ENCODE measurements at regions of chr10 and their contacts with region 1.

Region 1: DNA sequence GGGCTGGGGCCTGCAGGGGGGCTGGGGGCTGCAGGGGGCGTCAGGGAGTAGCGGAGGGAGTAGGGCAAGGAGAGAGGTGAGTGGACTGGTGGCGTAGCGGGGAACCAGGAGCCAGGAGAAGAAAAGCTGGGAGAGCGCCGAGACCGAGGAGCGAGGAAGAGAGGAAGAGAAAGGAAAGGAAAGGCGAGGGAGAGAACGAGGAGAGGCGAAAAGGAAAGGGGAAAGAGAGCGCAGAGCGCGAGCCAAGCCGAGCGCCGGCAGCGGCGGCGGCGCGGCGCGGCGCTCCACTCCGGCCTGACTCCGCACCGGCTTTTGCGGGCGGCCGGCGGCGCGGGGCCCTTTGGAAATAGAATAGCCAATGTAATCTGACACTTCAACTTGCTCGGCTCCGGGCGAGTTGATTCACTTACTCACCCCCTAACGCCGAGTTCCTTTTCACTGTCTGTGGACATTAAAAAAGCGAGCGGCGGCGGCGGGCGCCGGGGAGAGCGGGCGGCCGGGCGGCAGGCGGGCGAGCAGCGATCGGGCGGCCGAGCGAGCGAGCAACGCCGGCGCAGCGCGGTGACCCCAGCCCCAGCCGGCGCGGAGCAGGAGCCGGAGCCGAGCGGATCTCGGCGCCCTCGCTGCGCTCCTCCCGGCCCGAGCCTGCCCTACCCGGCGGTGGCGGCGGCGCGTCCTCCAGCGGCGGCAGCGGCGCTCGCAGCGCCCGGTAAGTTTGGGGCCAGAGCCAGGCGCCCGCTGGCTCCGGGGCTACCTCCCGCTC is at the start of gene ZMIZ1:
- DNase-seq: peak; percentile 74 to 86 (median 84)
- ATAC-seq: peak; percentile 78
- H3K4me3 ChIP-seq: peak within 1 kb of the TSS; percentile 83
- H3K4me3 Mint-ChIP-seq: peak within 1 kb of the TSS; percentile 92 to 98 (median 96)
- H3K27ac ChIP-seq: peak within 1 kb of the TSS; percentile 62
- H3K27ac Mint-ChIP-seq: peak within 1 kb of the TSS; percentile 57 to 97 (median 91)
- H3K4me1 ChIP-seq: peaks cover 11 to 24% of the 10 kb centered on the region in 2 donors
- H3K4me1 Mint-ChIP-seq: peaks cover 21 to 65% (median 53%) of the 10 kb centered on the region in 7 donors
- H3K27me3 ChIP-seq: no peaks in the 10 kb centered on the region
- H3K27me3 Mint-ChIP-seq: peaks cover 0 to 25% (median 0%) of the 10 kb centered on the region in 5 donors
- total RNA-seq, gene ZMIZ1: 13.5 to 57.2 (median 24.5) TPM

Region 2: DNA sequence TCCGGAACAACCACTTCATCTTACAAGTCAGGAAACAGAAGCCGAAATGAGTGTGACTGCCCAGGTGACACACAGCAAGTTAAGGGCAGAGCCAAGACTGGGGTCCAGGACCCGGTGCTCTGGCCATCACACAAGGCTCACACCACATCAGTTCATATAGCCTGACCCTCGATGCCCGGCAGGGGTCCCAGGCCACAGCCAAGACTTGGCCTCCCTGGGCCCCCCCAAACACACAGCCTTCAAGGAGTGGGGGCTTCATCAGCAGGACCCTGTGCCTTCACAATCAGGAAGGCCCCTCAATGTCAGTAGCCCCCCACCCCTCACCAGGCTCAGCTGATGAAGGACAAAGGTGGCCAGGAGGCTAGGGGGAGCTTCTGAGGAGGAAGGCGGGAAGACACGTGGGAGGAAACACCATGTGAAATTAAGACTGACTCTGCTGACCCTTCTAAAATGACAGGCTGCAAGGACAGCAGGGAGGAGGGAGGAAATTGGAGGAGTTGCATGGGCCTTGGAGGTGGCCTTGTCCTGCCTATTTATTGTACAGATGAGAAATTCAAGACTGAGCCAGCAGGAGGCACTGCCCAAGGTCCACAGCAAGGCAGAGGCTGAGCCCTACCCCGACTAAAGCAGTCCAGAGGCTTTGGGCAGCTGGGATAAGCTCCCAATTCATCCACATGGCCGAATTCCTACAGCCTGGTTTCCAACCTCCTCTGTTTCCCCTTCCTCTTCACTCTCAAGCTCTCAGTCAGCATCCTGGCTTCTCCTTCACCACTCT is 216.1 kb before region 1 on chr10:
- CTCF ChIA-PET with region 1: no interaction called
- POLR2A ChIA-PET with region 1: no interaction called
- intact Hi-C with region 1: loop called in 1 of 2 experiments (anchors 1 kb)
- DNase-seq: peak in 5 of 9 donors; percentile 8 to 29 (median 14)
- ATAC-seq: peak; percentile 57
- H3K4me3 ChIP-seq: no peak overlapping the region
- H3K4me3 Mint-ChIP-seq: no peak overlapping the region
- H3K27ac ChIP-seq: no peak overlapping the region
- H3K27ac Mint-ChIP-seq: no peak overlapping the region
- H3K4me1 ChIP-seq: no peaks in the 10 kb centered on the region
- H3K4me1 Mint-ChIP-seq: no peaks in the 10 kb centered on the region
- H3K27me3 ChIP-seq: no peaks in the 10 kb centered on the region
- H3K27me3 Mint-ChIP-seq: no peaks in the 10 kb centered on the region

Region 3: DNA sequence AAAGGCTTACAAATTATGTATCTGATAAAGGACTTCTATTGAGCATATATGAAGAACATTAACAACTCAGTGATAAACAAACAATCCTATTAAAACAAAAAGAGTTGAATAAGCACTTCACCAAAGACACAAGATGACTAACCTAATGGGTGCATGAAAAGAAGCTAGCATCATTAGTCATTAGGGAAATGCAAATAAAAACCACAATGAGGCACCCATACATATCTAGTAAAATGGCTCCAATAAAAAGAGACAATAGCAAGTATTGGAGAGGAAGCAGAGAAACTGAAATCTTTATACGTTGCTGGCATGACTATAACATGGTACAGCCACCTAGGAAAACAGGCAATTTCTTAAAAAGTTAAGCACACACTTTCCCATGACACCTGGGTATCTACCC is 77.6 kb before region 1 on chr10:
- CTCF ChIA-PET with region 1: no interaction called
- POLR2A ChIA-PET with region 1: no interaction called
- intact Hi-C with region 1: no loop called
- DNase-seq: no peak
- ATAC-seq: peak; percentile 38
- H3K4me3 ChIP-seq: no peak overlapping the region
- H3K4me3 Mint-ChIP-seq: no peak overlapping the region
- H3K27ac ChIP-seq: no peak overlapping the region
- H3K27ac Mint-ChIP-seq: no peak overlapping the region
- H3K4me1 ChIP-seq: peaks cover 0 to 5% of the 10 kb centered on the region in 2 donors
- H3K4me1 Mint-ChIP-seq: peaks cover 0 to 13% (median 7%) of the 10 kb centered on the region in 7 donors
- H3K27me3 ChIP-seq: no peaks in the 10 kb centered on the region
- H3K27me3 Mint-ChIP-seq: peaks cover 0 to 11% (median 0%) of the 10 kb centered on the region in 5 donors

Region 4: GRCh38 chr10:79052291-79053080 is 16.3 kb before region 1 on chr10:
- CTCF ChIA-PET with region 1: interaction called, 5 read pairs
- POLR2A ChIA-PET with region 1: interaction called, 3 read pairs
- intact Hi-C with region 1: loop called (anchors 1 kb)
- DNase-seq: peak in 7 of 9 donors; percentile 52 to 76 (median 63)
- ATAC-seq: peak; percentile 75
- H3K4me3 ChIP-seq: no peak overlapping the region
- H3K4me3 Mint-ChIP-seq: peak overlapping the region in 4 of 10 donors; percentile 16 to 48 (median 38)
- H3K27ac ChIP-seq: no peak overlapping the region
- H3K27ac Mint-ChIP-seq: peak overlapping the region in 3 of 9 donors; percentile 30 to 81 (median 53)
- H3K4me1 ChIP-seq: peaks cover 17 to 30% of the 10 kb centered on the region in 2 donors
- H3K4me1 Mint-ChIP-seq: peaks cover 25 to 56% (median 46%) of the 10 kb centered on the region in 7 donors
- H3K27me3 ChIP-seq: no peaks in the 10 kb centered on the region
- H3K27me3 Mint-ChIP-seq: no peaks in the 10 kb centered on the region

Region 5: GRCh38 chr10:79242620-79243152 is 173.9 kb after region 1 on chr10:
- CTCF ChIA-PET with region 1: no interaction called
- POLR2A ChIA-PET with region 1: no interaction called
- intact Hi-C with region 1: loop called (anchors 2 kb)
- DNase-seq: peak; percentile 6 to 71 (median 35)
- ATAC-seq: peak; percentile 39
- H3K4me3 ChIP-seq: peak overlapping the region; percentile 37
- H3K4me3 Mint-ChIP-seq: peak overlapping the region; percentile 43 to 87 (median 77)
- H3K27ac ChIP-seq: no peak overlapping the region
- H3K27ac Mint-ChIP-seq: peak overlapping the region in 1 of 9 donors; percentile 80
- H3K4me1 ChIP-seq: peaks cover 27 to 38% of the 10 kb centered on the region in 2 donors
- H3K4me1 Mint-ChIP-seq: peaks cover 39 to 58% (median 41%) of the 10 kb centered on the region in 7 donors
- H3K27me3 ChIP-seq: no peaks in the 10 kb centered on the region
- H3K27me3 Mint-ChIP-seq: no peaks in the 10 kb centered on the region

Region 6: DNA sequence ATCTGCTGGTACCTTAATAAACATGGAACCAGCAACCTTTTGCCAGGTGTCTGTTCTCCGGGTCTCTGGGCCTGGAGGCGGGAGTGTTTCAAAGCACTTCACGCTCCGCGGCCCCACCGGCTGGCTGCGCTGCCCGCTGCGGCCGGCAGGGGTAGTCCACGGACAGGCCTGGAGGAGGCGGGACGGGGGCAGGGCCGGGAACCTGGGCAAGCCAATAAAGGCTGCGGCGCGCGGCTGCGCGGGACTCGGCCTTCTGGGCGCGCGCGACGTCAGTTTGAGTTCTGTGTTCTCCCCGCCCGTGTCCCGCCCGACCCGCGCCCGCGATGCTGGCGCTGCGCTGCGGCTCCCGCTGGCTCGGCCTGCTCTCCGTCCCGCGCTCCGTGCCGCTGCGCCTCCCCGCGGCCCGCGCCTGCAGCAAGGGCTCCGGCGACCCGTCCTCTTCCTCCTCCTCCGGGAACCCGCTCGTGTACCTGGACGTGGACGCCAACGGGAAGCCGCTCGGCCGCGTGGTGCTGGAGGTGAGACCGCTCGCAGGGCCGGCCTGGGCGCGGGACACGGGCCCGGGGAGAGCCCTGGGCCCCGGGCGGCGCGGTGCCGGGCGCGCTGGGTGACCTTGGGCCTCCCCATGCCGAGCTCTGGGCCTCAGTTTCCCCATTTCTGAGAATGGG is 278.6 kb after region 1 on chr10 and contains the start of gene PPIF:
- CTCF ChIA-PET with region 1: no interaction called
- POLR2A ChIA-PET with region 1: no interaction called
- intact Hi-C with region 1: loop called (anchors 1 to 5 kb)
- DNase-seq: peak; percentile 79 to 99 (median 90)
- ATAC-seq: peak; percentile 96
- H3K4me3 ChIP-seq: peak within 1 kb of the TSS; percentile 72
- H3K4me3 Mint-ChIP-seq: peak within 1 kb of the TSS; percentile 71 to 92 (median 78)
- H3K27ac ChIP-seq: peak within 1 kb of the TSS; percentile 73
- H3K27ac Mint-ChIP-seq: peak within 1 kb of the TSS; percentile 76 to 96 (median 86)
- H3K4me1 ChIP-seq: peaks cover 19 to 25% of the 10 kb centered on the region in 2 donors
- H3K4me1 Mint-ChIP-seq: peaks cover 9 to 50% (median 19%) of the 10 kb centered on the region in 7 donors
- H3K27me3 ChIP-seq: no peaks in the 10 kb centered on the region
- H3K27me3 Mint-ChIP-seq: no peaks in the 10 kb centered on the region
- total RNA-seq, gene PPIF: 20.6 to 192 (median 73.3) TPM